ENCODE measurements at regions of chr15 and their contacts with region 1.

Region 1: GRCh38 chr15:99424978-99425656 is 140.7 kb upstream of the MEF2A start:
- DNase-seq: peak in 12 of 14 experiments; percentile 30 to 78 (median 54)
- ATAC-seq: peak; percentile 87
- H3K4me3 ChIP-seq: peak overlapping the region; percentile 4
- H3K4me3 Mint-ChIP-seq: peak overlapping the region; percentile 81
- H3K27ac ChIP-seq: peak overlapping the region; percentile 69 to 74
- H3K27ac Mint-ChIP-seq: peak overlapping the region; percentile 97
- H3K4me1 ChIP-seq: peaks cover 47% of the 10 kb centered on the region
- H3K4me1 Mint-ChIP-seq: peaks cover 66% of the 10 kb centered on the region
- H3K27me3 ChIP-seq: no peaks in the 10 kb centered on the region
- H3K27me3 Mint-ChIP-seq: no peaks in the 10 kb centered on the region
- CTCF ChIP-seq: no peak

Region 2: DNA sequence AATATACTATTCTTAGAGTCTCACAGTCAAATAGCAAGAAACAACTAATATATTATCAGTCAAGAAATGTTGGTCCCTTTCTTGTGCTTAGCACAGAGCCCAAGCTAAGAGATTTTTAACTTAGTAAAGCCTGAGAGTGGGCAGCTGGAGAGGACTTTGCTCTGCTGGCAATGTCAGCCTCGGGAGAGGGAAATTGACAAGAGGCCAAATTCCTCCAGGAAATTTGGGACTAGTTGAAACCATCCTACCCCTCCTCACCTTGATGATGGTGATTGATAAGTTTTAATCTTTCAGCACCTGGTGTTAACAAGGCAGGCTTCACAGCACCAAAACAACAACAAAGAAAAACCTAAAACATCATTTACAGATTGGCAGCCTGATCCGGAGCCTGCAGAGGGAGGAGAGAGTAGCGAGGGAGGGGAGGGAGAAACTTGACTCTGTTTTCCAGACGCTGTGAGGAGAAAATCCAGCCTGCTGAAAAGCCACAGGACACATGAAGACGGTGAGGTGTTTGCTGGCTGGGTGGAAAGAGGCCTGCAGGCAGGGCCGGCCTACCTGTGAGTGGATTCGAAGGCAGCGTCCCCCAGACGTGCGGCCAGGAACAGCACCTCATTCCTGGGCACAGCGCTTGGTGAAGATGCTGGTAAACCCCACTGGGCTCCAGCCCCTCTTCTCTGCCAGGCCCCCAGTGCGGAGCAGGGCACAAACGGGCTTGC is 22.9 kb before region 1 on chr15:
- CTCF ChIA-PET with region 1: no interaction called
- POLR2A ChIA-PET with region 1: no interaction called
- intact Hi-C with region 1: no loop called
- DNase-seq: no peak
- ATAC-seq: no peak
- H3K4me3 ChIP-seq: no peak overlapping the region
- H3K4me3 Mint-ChIP-seq: no peak overlapping the region
- H3K27ac ChIP-seq: no peak overlapping the region
- H3K27ac Mint-ChIP-seq: no peak overlapping the region
- H3K4me1 ChIP-seq: no peaks in the 10 kb centered on the region
- H3K4me1 Mint-ChIP-seq: no peaks in the 10 kb centered on the region
- H3K27me3 ChIP-seq: no peaks in the 10 kb centered on the region
- H3K27me3 Mint-ChIP-seq: no peaks in the 10 kb centered on the region
- CTCF ChIP-seq: no peak

Region 3: DNA sequence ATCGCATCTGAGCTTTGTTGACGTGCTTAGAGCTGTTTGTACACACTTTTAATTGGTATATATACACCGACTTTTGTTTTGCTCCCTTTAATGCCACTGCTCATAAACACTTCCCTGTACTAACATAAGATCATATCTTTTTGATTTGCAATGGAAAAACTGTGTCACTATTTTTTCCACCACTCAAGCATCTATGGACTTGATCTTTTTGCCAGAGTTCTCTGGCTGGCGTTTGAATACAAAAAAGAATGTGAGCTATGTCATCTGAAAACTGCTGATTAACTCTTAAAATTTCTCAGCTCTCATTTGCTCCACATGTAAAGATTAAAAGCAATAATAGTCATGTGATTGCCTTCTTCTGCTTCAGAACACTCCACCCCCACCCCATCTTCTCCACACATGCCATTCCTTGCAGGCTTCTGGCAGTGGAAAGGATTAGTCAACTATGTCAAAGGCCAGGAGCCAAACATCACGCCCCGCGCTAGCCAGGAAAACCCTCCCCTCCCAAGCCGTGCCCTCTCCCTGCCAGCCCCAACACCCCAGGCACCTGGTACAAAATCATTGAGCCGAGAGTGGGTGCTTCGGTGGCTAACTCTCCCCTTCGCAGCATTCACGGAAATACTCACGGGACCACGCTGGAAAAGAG is 17.3 kb after region 1 on chr15:
- CTCF ChIA-PET with region 1: no interaction called
- POLR2A ChIA-PET with region 1: interaction called, 15 read pairs
- intact Hi-C with region 1: loop called in 1 of 2 experiments (anchors 2 kb)
- DNase-seq: peak in 1 of 14 experiments; percentile 31
- ATAC-seq: no peak
- H3K4me3 ChIP-seq: no peak overlapping the region
- H3K4me3 Mint-ChIP-seq: peak overlapping the region; percentile 2
- H3K27ac ChIP-seq: no peak overlapping the region
- H3K27ac Mint-ChIP-seq: peak overlapping the region; percentile 90
- H3K4me1 ChIP-seq: peaks cover 61% of the 10 kb centered on the region
- H3K4me1 Mint-ChIP-seq: peaks cover 68% of the 10 kb centered on the region
- H3K27me3 ChIP-seq: no peaks in the 10 kb centered on the region
- H3K27me3 Mint-ChIP-seq: no peaks in the 10 kb centered on the region
- CTCF ChIP-seq: no peak

Region 4: GRCh38 chr15:99565299-99566156 is 140.4 kb after region 1 on chr15 and contains the start of gene MEF2A:
- CTCF ChIA-PET with region 1: no interaction called
- POLR2A ChIA-PET with region 1: interaction called, 16 read pairs
- intact Hi-C with region 1: loop called (anchors 5 kb)
- DNase-seq: peak; percentile 84 to 96 (median 88)
- ATAC-seq: peak; percentile 69
- H3K4me3 ChIP-seq: peak within 1 kb of the TSS; percentile 97
- H3K4me3 Mint-ChIP-seq: peak within 1 kb of the TSS; percentile 97
- H3K27ac ChIP-seq: peak within 1 kb of the TSS; percentile 86 to 94
- H3K27ac Mint-ChIP-seq: peak within 1 kb of the TSS; percentile 96
- H3K4me1 ChIP-seq: peaks cover 22% of the 10 kb centered on the region
- H3K4me1 Mint-ChIP-seq: peaks cover 57% of the 10 kb centered on the region
- H3K27me3 ChIP-seq: no peaks in the 10 kb centered on the region
- H3K27me3 Mint-ChIP-seq: no peaks in the 10 kb centered on the region
- CTCF ChIP-seq: no peak
- total RNA-seq, gene MEF2A: 23.2 to 24.9 TPM

Region 5: GRCh38 chr15:99644913-99645542 is 219.9 kb after region 1 on chr15:
- CTCF ChIA-PET with region 1: no interaction called
- POLR2A ChIA-PET with region 1: no interaction called
- intact Hi-C with region 1: no loop called
- DNase-seq: no peak
- ATAC-seq: no peak
- H3K4me3 ChIP-seq: no peak overlapping the region
- H3K4me3 Mint-ChIP-seq: no peak overlapping the region
- H3K27ac ChIP-seq: no peak overlapping the region
- H3K27ac Mint-ChIP-seq: no peak overlapping the region
- H3K4me1 ChIP-seq: no peaks in the 10 kb centered on the region
- H3K4me1 Mint-ChIP-seq: peaks cover under 1% of the 10 kb centered on the region
- H3K27me3 ChIP-seq: no peaks in the 10 kb centered on the region
- H3K27me3 Mint-ChIP-seq: no peaks in the 10 kb centered on the region
- CTCF ChIP-seq: no peak

Region 6: GRCh38 chr15:99669214-99669613 is 244.1 kb after region 1 on chr15:
- CTCF ChIA-PET with region 1: no interaction called
- POLR2A ChIA-PET with region 1: no interaction called
- intact Hi-C with region 1: no loop called
- DNase-seq: no peak
- ATAC-seq: no peak
- H3K4me3 ChIP-seq: no peak overlapping the region
- H3K4me3 Mint-ChIP-seq: no peak overlapping the region
- H3K27ac ChIP-seq: no peak overlapping the region
- H3K27ac Mint-ChIP-seq: no peak overlapping the region
- H3K4me1 ChIP-seq: no peaks in the 10 kb centered on the region
- H3K4me1 Mint-ChIP-seq: no peaks in the 10 kb centered on the region
- H3K27me3 ChIP-seq: no peaks in the 10 kb centered on the region
- H3K27me3 Mint-ChIP-seq: no peaks in the 10 kb centered on the region
- CTCF ChIP-seq: no peak